CD4-positive, alpha-beta memory T cell (primary cell): ENCODE measurements at regions of chr2 and their contacts with region 1.

Region 1: GRCh38 chr2:147288131-147288530 is 556.7 kb upstream of the ACVR2A start:
- DNase-seq: peak; percentile 55 to 70 (median 67)
- H3K4me3 ChIP-seq: no peak overlapping the region
- H3K4me3 Mint-ChIP-seq: peak overlapping the region in 6 of 8 donors; percentile 3 to 62 (median 28)
- H3K27ac ChIP-seq: no peak overlapping the region
- H3K27ac Mint-ChIP-seq: peak overlapping the region; percentile 5 to 88 (median 44)
- H3K4me1 ChIP-seq: peaks cover 25% of the 10 kb centered on the region
- H3K4me1 Mint-ChIP-seq: peaks cover 19 to 30% (median 23%) of the 10 kb centered on the region in 4 donors
- H3K27me3 ChIP-seq: no peaks in the 10 kb centered on the region
- H3K27me3 Mint-ChIP-seq: no peaks in the 10 kb centered on the region

Region 2: DNA sequence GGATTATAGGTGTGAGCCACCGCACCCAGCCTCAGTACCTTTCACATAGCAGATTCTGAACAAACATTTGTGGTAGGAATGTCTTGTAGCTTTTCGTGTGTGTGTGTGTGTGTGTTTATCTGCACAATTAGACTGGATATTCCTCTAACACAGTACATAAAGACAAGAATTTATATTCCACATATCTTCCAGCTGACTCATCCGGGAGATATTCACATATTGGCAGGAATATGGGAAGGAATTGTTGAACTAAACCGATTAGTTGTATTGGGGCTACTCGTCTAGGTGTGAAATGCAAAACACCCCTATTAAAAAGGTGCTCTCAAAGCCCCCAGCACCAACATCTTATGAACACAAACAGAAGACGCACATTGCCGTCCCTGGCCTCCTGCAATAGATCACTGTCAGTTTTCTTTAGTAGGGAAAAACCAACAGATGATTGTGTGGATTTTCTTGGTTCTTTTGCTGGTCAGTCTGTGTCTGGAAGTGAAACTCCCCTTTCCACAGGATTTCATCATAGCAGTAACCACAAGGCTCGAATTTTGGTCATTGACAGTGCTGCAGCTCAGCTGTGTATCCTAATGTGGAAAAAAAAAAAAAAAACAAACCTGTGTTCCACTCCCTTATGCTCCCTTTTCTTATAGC is 348.2 kb after region 1 on chr2:
- CTCF ChIA-PET with region 1: no interaction called
- POLR2A ChIA-PET with region 1: no interaction called
- intact Hi-C with region 1: loop called (anchors 10 kb)
- DNase-seq: no peak
- H3K4me3 ChIP-seq: no peak overlapping the region
- H3K4me3 Mint-ChIP-seq: no peak overlapping the region
- H3K27ac ChIP-seq: no peak overlapping the region
- H3K27ac Mint-ChIP-seq: peak overlapping the region in 1 of 7 donors; percentile 77
- H3K4me1 ChIP-seq: peaks cover 13% of the 10 kb centered on the region
- H3K4me1 Mint-ChIP-seq: peaks cover 0 to 11% (median 7%) of the 10 kb centered on the region in 4 donors
- H3K27me3 ChIP-seq: no peaks in the 10 kb centered on the region
- H3K27me3 Mint-ChIP-seq: peaks cover 0 to 2% of the 10 kb centered on the region in 2 donors

Region 3: GRCh38 chr2:147910990-147911473 is 622.9 kb after region 1 on chr2:
- CTCF ChIA-PET with region 1: interaction called, 7 read pairs
- POLR2A ChIA-PET with region 1: interaction called, 3 read pairs
- intact Hi-C with region 1: loop called (anchors 1 kb)
- DNase-seq: peak; percentile 48 to 65 (median 57)
- H3K4me3 ChIP-seq: no peak overlapping the region
- H3K4me3 Mint-ChIP-seq: no peak overlapping the region
- H3K27ac ChIP-seq: no peak overlapping the region
- H3K27ac Mint-ChIP-seq: peak overlapping the region in 4 of 7 donors; percentile 17 to 52 (median 36)
- H3K4me1 ChIP-seq: peaks cover 12% of the 10 kb centered on the region
- H3K4me1 Mint-ChIP-seq: peaks cover 11 to 18% (median 14%) of the 10 kb centered on the region in 4 donors
- H3K27me3 ChIP-seq: no peaks in the 10 kb centered on the region
- H3K27me3 Mint-ChIP-seq: no peaks in the 10 kb centered on the region